CD8-positive, alpha-beta memory T cell (primary cell): ENCODE measurements at regions of chr9 and their contacts with region 1.

Region 1: GRCh38 chr9:71783120-71783530 is 14.8 kb upstream of the CEMIP2 start:
- DNase-seq: peak; percentile 73 to 95 (median 88)
- H3K4me3 ChIP-seq: peak overlapping the region; percentile 7
- H3K4me3 Mint-ChIP-seq: peak overlapping the region; percentile 6 to 84 (median 80)
- H3K27ac ChIP-seq: peak overlapping the region; percentile 77
- H3K27ac Mint-ChIP-seq: peak overlapping the region; percentile 89 to 100 (median 98)
- H3K4me1 ChIP-seq: peaks cover 39% of the 10 kb centered on the region
- H3K4me1 Mint-ChIP-seq: peaks cover 47 to 59% (median 49%) of the 10 kb centered on the region in 3 donors
- H3K27me3 ChIP-seq: no peaks in the 10 kb centered on the region
- H3K27me3 Mint-ChIP-seq: no peaks in the 10 kb centered on the region

Region 2: DNA sequence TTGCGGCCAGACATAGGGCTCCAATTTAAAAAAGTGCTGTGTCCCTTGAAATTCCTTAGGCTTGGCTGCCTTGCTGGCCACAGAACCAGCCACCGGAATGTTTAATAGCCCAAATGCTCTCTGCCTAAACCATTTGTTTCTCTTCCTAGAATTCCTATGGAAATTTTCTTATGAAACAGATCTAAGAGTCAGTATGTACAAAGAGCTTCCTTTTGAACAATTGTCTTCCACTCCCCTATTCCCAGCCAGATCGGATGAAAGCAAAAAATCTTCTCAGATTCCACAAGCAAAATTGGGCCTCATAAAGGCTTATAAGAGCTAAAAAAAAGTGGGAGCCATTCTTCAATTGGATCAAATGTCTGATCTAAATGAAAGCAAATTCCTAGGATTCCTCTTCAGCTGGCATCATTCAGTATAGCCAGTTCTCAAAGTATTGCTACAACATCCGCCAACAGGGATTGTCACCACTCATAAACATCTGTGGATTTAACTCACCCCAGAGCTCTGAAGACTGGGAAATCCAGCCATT is 119.1 kb before region 1 on chr9:
- CTCF ChIA-PET with region 1: no interaction called
- POLR2A ChIA-PET with region 1: no interaction called
- DNase-seq: no peak
- H3K4me3 ChIP-seq: no peak overlapping the region
- H3K4me3 Mint-ChIP-seq: no peak overlapping the region
- H3K27ac ChIP-seq: no peak overlapping the region
- H3K27ac Mint-ChIP-seq: no peak overlapping the region
- H3K4me1 ChIP-seq: no peaks in the 10 kb centered on the region
- H3K4me1 Mint-ChIP-seq: peaks cover 13 to 21% (median 14%) of the 10 kb centered on the region in 3 donors
- H3K27me3 ChIP-seq: no peaks in the 10 kb centered on the region
- H3K27me3 Mint-ChIP-seq: peaks cover 4 to 19% of the 10 kb centered on the region in 2 donors

Region 3: DNA sequence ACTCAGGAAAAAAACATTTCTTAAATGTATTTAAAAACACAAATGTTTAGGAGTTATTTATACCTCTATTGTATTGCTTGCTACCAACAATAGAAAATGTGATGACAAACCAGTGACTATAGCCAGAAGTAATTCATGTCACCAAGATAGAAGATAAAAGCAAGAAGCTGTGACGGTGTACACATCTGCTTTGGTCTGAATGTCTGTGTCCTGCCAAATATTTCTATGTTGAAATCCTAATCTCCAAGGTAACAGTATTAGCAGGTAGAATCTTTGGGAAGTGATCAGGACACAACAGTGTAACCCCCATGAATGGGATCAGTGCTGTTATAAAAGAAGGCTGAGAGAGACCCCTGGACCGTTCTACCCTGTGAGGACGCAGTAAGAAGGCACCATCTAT is 89.5 kb before region 1 on chr9:
- CTCF ChIA-PET with region 1: no interaction called
- POLR2A ChIA-PET with region 1: no interaction called
- DNase-seq: no peak
- H3K4me3 ChIP-seq: no peak overlapping the region
- H3K4me3 Mint-ChIP-seq: no peak overlapping the region
- H3K27ac ChIP-seq: no peak overlapping the region
- H3K27ac Mint-ChIP-seq: peak overlapping the region in 1 of 8 donors; percentile 15
- H3K4me1 ChIP-seq: no peaks in the 10 kb centered on the region
- H3K4me1 Mint-ChIP-seq: peaks cover 0 to 8% (median 4%) of the 10 kb centered on the region in 3 donors
- H3K27me3 ChIP-seq: no peaks in the 10 kb centered on the region
- H3K27me3 Mint-ChIP-seq: peaks cover 0 to 1% of the 10 kb centered on the region in 2 donors

Region 4: DNA sequence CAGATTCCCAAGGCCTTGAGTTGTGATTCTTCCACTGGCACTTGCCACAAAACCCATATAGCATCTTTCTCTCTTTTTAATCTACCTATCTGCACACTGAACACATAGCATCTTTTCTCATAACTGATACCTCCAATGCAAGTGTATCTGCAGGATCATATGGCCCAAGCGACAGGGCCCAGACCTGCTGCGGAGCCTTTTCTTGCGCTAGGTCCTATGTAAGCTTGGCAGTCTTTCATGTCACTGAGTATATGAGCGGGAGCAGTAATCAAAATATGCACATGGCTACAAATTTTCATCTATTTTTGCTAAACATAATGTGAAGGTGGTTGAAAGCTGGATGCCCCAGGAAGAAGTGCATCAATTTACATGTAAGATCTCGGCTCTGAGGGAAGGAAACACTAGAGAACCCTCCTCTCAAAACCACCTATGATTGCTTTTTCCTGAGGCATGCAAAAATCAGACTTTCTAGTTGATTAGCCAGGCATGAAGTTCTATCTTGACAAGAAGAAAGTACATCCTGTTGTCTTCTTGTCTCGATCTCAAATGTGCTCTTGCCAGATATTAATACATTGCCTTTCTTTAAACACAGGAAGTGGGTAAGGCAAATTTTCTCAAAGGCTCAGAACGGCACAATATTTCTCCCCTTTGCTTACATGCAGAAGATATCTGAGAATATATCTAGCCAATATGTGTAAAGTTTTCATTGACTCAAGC is 12.1 kb after region 1 on chr9:
- CTCF ChIA-PET with region 1: interaction called, 95 read pairs
- POLR2A ChIA-PET with region 1: interaction called, 19 read pairs
- DNase-seq: peak in 2 of 5 donors; percentile 65 to 77
- H3K4me3 ChIP-seq: peak overlapping the region; percentile 21
- H3K4me3 Mint-ChIP-seq: peak overlapping the region; percentile 16 to 74 (median 61)
- H3K27ac ChIP-seq: peak overlapping the region; percentile 2
- H3K27ac Mint-ChIP-seq: peak overlapping the region; percentile 76 to 98 (median 93)
- H3K4me1 ChIP-seq: peaks cover 60% of the 10 kb centered on the region
- H3K4me1 Mint-ChIP-seq: peaks cover 48 to 64% (median 62%) of the 10 kb centered on the region in 3 donors
- H3K27me3 ChIP-seq: no peaks in the 10 kb centered on the region
- H3K27me3 Mint-ChIP-seq: no peaks in the 10 kb centered on the region